ENCODE measurements at regions of chr3 and their contacts with region 1.

Region 1: DNA sequence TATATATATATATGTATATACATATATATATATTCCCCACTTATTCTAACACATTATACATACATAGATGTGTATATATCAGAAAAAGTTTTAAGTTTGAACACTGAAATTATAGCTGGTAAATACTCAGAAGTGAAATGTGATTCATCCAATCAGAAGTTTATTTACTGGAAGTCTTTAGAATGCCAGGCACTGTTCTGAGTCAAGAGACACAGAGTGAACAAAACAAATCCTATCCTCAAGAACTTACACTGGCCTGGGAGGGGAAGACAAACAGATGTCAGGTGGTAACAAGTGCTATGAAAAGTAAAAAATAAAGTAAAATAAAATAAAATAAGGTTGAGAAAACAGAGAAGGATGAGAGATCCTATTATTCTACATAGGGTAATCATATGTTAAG is 13.4 kb downstream of the DHX36 start:
- DNase-seq: peak; percentile 54
- ATAC-seq: peak; percentile 79
- H3K4me3 ChIP-seq: no peak overlapping the region
- H3K27ac ChIP-seq: no peak overlapping the region
- H3K4me1 ChIP-seq: no peaks in the 10 kb centered on the region
- H3K27me3 ChIP-seq: no peaks in the 10 kb centered on the region
- CTCF ChIP-seq: no peak
- POLR2A ChIP-seq: no peak
- RAD21 ChIP-seq: no peak

Region 2: GRCh38 chr3:154105218-154105975 is 205.4 kb before region 1 on chr3:
- CTCF ChIA-PET with region 1: no interaction called
- POLR2A ChIA-PET with region 1: interaction called, 23 read pairs
- dilution Hi-C with region 1: no loop called
- in situ Hi-C with region 1: no loop called
- intact Hi-C with region 1: no loop called
- DNase-seq: peak; percentile 3
- ATAC-seq: no peak
- H3K4me3 ChIP-seq: no peak overlapping the region
- H3K27ac ChIP-seq: no peak overlapping the region
- H3K4me1 ChIP-seq: no peaks in the 10 kb centered on the region
- H3K27me3 ChIP-seq: no peaks in the 10 kb centered on the region
- CTCF ChIP-seq: no peak
- POLR2A ChIP-seq: no peak
- RAD21 ChIP-seq: no peak

Region 3: DNA sequence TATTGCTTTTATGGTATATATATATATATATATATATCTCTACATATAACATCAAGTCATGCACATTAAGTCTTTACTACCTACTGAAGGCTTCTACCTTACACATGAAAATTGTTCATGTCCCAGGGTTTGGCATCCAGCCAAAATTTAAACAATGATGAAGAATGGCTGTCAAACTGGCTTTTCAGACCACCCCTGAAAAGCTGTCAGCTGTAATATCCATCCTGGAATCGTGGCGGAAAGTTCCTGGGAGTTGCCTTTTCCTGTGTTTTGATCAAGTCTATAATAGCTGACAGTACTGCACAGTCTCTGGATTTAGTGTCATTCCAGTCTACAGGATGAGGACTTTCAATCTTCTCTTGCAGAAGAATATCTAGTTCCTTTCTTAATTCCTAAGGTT is 34.9 kb before region 1 on chr3:
- CTCF ChIA-PET with region 1: no interaction called
- POLR2A ChIA-PET with region 1: no interaction called
- dilution Hi-C with region 1: no loop called
- in situ Hi-C with region 1: no loop called
- intact Hi-C with region 1: loop called (anchors 5 kb)
- DNase-seq: no peak
- ATAC-seq: no peak
- H3K4me3 ChIP-seq: no peak overlapping the region
- H3K27ac ChIP-seq: no peak overlapping the region
- H3K4me1 ChIP-seq: no peaks in the 10 kb centered on the region
- H3K27me3 ChIP-seq: no peaks in the 10 kb centered on the region
- CTCF ChIP-seq: no peak
- POLR2A ChIP-seq: no peak
- RAD21 ChIP-seq: no peak

Region 4: GRCh38 chr3:154356009-154356408 is 45.2 kb after region 1 on chr3:
- CTCF ChIA-PET with region 1: no interaction called
- POLR2A ChIA-PET with region 1: no interaction called
- dilution Hi-C with region 1: no loop called
- in situ Hi-C with region 1: no loop called
- intact Hi-C with region 1: no loop called
- DNase-seq: no peak
- ATAC-seq: no peak
- H3K4me3 ChIP-seq: no peak overlapping the region
- H3K27ac ChIP-seq: no peak overlapping the region
- H3K4me1 ChIP-seq: no peaks in the 10 kb centered on the region
- H3K27me3 ChIP-seq: no peaks in the 10 kb centered on the region
- CTCF ChIP-seq: no peak
- POLR2A ChIP-seq: no peak
- RAD21 ChIP-seq: no peak

Measured in IMR-90 (cell line).